ENCODE measurements at regions of chr10 and their contacts with region 1.

Region 1: GRCh38 chr10:67764012-67764822 is 68.2 kb upstream of the CTNNA3 start:
- DNase-seq: peak; percentile 94 to 100 (median 97)
- ATAC-seq: peak; percentile 80
- H3K4me3 ChIP-seq: peak overlapping the region; percentile 86
- H3K4me3 Mint-ChIP-seq: peak overlapping the region; percentile 95
- H3K27ac ChIP-seq: peak overlapping the region; percentile 88 to 91
- H3K27ac Mint-ChIP-seq: peak overlapping the region; percentile 100
- H3K4me1 ChIP-seq: peaks cover 10% of the 10 kb centered on the region
- H3K4me1 Mint-ChIP-seq: peaks cover 27% of the 10 kb centered on the region
- H3K27me3 ChIP-seq: no peaks in the 10 kb centered on the region
- H3K27me3 Mint-ChIP-seq: peaks cover 17% of the 10 kb centered on the region
- CTCF ChIP-seq: no peak

Region 2: DNA sequence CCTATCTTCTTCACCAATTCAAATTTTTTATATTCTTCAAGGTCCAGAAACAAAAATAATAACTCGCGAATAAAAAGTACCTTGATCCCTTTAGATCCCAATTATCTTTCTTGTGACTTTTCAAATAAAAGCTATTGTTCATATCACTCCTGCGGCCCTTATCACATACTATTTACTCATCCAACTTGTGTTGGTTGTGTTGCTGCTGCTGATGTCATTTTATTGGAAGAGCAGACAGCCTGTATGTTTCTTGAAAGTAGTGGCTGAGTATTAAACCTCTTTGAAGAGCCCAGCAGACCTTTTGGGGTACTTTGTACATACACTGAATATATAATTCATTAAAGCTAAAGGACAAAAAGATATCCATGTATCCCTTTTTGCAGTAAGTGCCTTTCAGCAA is 299.9 kb before region 1 on chr10:
- CTCF ChIA-PET with region 1: no interaction called
- POLR2A ChIA-PET with region 1: no interaction called
- intact Hi-C with region 1: no loop called
- DNase-seq: no peak
- ATAC-seq: no peak
- H3K4me3 ChIP-seq: no peak overlapping the region
- H3K4me3 Mint-ChIP-seq: no peak overlapping the region
- H3K27ac ChIP-seq: no peak overlapping the region
- H3K27ac Mint-ChIP-seq: no peak overlapping the region
- H3K4me1 ChIP-seq: no peaks in the 10 kb centered on the region
- H3K4me1 Mint-ChIP-seq: no peaks in the 10 kb centered on the region
- H3K27me3 ChIP-seq: peaks cover 0 to 3% of the 10 kb centered on the region in 2 experiments
- H3K27me3 Mint-ChIP-seq: peaks cover 12% of the 10 kb centered on the region
- CTCF ChIP-seq: no peak

Region 3: GRCh38 chr10:67612577-67613537 is 151.4 kb before region 1 on chr10:
- CTCF ChIA-PET with region 1: no interaction called
- POLR2A ChIA-PET with region 1: interaction called, 19 read pairs
- intact Hi-C with region 1: loop called in 1 of 2 experiments (anchors 1 kb)
- DNase-seq: peak in 13 of 14 experiments; percentile 17 to 86 (median 39)
- ATAC-seq: peak; percentile 95
- H3K4me3 ChIP-seq: peak overlapping the region; percentile 24
- H3K4me3 Mint-ChIP-seq: peak overlapping the region; percentile 74
- H3K27ac ChIP-seq: peak overlapping the region in 1 of 2 donors; percentile 50
- H3K27ac Mint-ChIP-seq: peak overlapping the region; percentile 72
- H3K4me1 ChIP-seq: peaks cover 16% of the 10 kb centered on the region
- H3K4me1 Mint-ChIP-seq: peaks cover 23% of the 10 kb centered on the region
- H3K27me3 ChIP-seq: no peaks in the 10 kb centered on the region
- H3K27me3 Mint-ChIP-seq: no peaks in the 10 kb centered on the region
- CTCF ChIP-seq: no peak

Region 4: GRCh38 chr10:67779465-67780203 is 15.4 kb after region 1 on chr10:
- CTCF ChIA-PET with region 1: interaction called, 14 read pairs
- POLR2A ChIA-PET with region 1: interaction called, 27 read pairs
- intact Hi-C with region 1: no loop called
- DNase-seq: peak; percentile 20 to 89 (median 62)
- ATAC-seq: peak; percentile 94
- H3K4me3 ChIP-seq: no peak overlapping the region
- H3K4me3 Mint-ChIP-seq: no peak overlapping the region
- H3K27ac ChIP-seq: no peak overlapping the region
- H3K27ac Mint-ChIP-seq: no peak overlapping the region
- H3K4me1 ChIP-seq: peaks cover 17% of the 10 kb centered on the region
- H3K4me1 Mint-ChIP-seq: peaks cover 22% of the 10 kb centered on the region
- H3K27me3 ChIP-seq: no peaks in the 10 kb centered on the region
- H3K27me3 Mint-ChIP-seq: no peaks in the 10 kb centered on the region
- CTCF ChIP-seq: peak; percentile 94

Region 5: DNA sequence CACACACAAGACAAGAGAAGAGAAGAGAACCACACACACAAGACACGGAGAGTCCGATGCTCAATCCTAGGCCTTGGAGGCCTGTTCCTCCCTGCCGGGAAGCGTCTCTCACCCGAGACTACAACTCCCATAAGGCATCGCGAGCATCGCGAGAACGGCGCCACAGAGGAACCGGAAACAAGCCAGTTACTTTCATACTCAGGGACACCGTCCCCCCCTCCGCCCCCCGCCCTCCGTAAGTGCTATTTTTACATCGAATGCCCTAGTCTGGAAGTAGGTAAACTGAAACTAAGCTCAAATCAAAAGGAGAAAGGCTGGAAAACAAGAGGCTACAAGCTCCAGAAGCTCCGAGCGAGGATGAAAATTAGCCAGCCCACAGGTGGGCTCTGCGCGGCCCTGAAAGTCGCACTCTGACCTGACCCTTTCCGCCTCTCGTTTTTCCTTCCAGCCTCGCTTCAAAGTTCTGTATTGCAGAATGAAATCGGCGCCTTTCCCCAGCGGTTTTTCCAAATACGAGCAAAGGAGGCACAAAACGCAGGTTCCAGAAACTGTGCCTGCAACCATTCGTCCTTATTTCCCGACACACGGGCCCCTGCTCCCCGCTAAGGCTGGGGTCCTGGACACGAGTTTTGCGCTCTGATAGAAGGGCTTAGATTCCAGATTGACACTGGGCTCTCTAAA is 85.3 kb after region 1 on chr10:
- CTCF ChIA-PET with region 1: interaction called, 5 read pairs
- POLR2A ChIA-PET with region 1: interaction called, 8 read pairs
- intact Hi-C with region 1: loop called in 1 of 2 experiments (anchors 2 kb)
- DNase-seq: peak; percentile 87 to 96 (median 93)
- ATAC-seq: peak; percentile 99
- H3K4me3 ChIP-seq: peak overlapping the region; percentile 91
- H3K4me3 Mint-ChIP-seq: peak overlapping the region; percentile 94
- H3K27ac ChIP-seq: peak overlapping the region; percentile 78 to 93
- H3K27ac Mint-ChIP-seq: peak overlapping the region; percentile 91
- H3K4me1 ChIP-seq: peaks cover 12% of the 10 kb centered on the region
- H3K4me1 Mint-ChIP-seq: peaks cover 9% of the 10 kb centered on the region
- H3K27me3 ChIP-seq: no peaks in the 10 kb centered on the region
- H3K27me3 Mint-ChIP-seq: no peaks in the 10 kb centered on the region
- CTCF ChIP-seq: no peak

Region 6: DNA sequence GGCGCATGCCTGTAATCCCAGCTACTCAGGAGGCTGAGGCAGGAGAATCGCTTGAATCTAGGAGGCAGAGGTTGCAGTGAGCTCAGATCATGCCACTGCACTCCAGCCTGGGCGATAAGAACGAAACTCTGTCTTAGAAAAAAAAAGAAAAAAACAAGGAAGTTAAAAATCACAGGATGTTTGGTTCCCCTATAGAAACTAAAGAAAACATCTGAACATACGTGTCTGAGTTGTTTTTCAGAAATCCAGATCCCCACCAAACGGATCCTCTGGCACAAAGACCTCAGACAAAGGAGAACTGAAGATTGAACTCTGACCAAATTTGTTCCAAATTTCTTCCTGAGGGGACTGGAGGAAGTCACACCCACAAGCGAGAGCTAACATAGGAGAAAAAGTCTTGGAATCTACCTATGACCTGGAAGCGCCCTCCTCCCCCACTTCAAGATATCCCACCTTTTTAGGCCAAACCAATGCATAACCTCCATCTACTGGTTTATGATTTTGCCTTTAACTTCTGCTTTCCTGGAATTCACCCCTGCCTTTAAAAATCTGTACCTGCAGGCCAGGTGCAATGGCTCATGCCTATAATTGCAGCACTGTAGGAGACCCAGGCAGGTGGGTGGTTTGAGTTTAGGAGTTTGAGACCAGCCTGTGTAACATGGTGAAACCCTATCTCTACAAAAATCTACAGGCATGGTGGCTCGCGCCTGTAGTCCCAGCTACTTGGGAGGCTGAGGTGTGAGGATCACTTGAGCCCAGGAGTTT is 100.6 kb after region 1 on chr10:
- CTCF ChIA-PET with region 1: no interaction called
- POLR2A ChIA-PET with region 1: no interaction called
- intact Hi-C with region 1: no loop called
- DNase-seq: no peak
- ATAC-seq: no peak
- H3K4me3 ChIP-seq: no peak overlapping the region
- H3K4me3 Mint-ChIP-seq: no peak overlapping the region
- H3K27ac ChIP-seq: no peak overlapping the region
- H3K27ac Mint-ChIP-seq: no peak overlapping the region
- H3K4me1 ChIP-seq: no peaks in the 10 kb centered on the region
- H3K4me1 Mint-ChIP-seq: no peaks in the 10 kb centered on the region
- H3K27me3 ChIP-seq: no peaks in the 10 kb centered on the region
- H3K27me3 Mint-ChIP-seq: no peaks in the 10 kb centered on the region
- CTCF ChIP-seq: no peak

Region 7: GRCh38 chr10:68074775-68075549 is 310.7 kb after region 1 on chr10 and contains the start of gene HERC4:
- CTCF ChIA-PET with region 1: no interaction called
- POLR2A ChIA-PET with region 1: no interaction called
- intact Hi-C with region 1: loop called (anchors 10 kb)
- DNase-seq: peak; percentile 84 to 97 (median 90)
- ATAC-seq: peak; percentile 92
- H3K4me3 ChIP-seq: peak within 1 kb of the TSS; percentile 88
- H3K4me3 Mint-ChIP-seq: peak within 1 kb of the TSS; percentile 93
- H3K27ac ChIP-seq: peak within 1 kb of the TSS; percentile 94
- H3K27ac Mint-ChIP-seq: peak within 1 kb of the TSS; percentile 89
- H3K4me1 ChIP-seq: peaks cover 6% of the 10 kb centered on the region
- H3K4me1 Mint-ChIP-seq: peaks cover 47% of the 10 kb centered on the region
- H3K27me3 ChIP-seq: no peaks in the 10 kb centered on the region
- H3K27me3 Mint-ChIP-seq: no peaks in the 10 kb centered on the region
- CTCF ChIP-seq: no peak
- total RNA-seq, gene HERC4: 46.0 to 46.8 TPM

Region 8: GRCh38 chr10:69425511-69426298 is 1661.5 kb after region 1 on chr10:
- CTCF ChIA-PET with region 1: no interaction called
- POLR2A ChIA-PET with region 1: no interaction called
- intact Hi-C with region 1: loop called in 1 of 2 experiments (anchors 10 kb)
- DNase-seq: peak in 12 of 14 experiments; percentile 16 to 89 (median 40)
- ATAC-seq: peak; percentile 92
- H3K4me3 ChIP-seq: no peak overlapping the region
- H3K4me3 Mint-ChIP-seq: peak overlapping the region; percentile 16
- H3K27ac ChIP-seq: peak overlapping the region; percentile 74 to 88
- H3K27ac Mint-ChIP-seq: peak overlapping the region; percentile 82
- H3K4me1 ChIP-seq: peaks cover 67% of the 10 kb centered on the region
- H3K4me1 Mint-ChIP-seq: peaks cover 61% of the 10 kb centered on the region
- H3K27me3 ChIP-seq: no peaks in the 10 kb centered on the region
- H3K27me3 Mint-ChIP-seq: no peaks in the 10 kb centered on the region
- CTCF ChIP-seq: no peak

Measured in CD4-positive, alpha-beta T cell (primary cell).